Calu3 (cell line): ENCODE measurements at regions of chr3 and their contacts with region 1.

Region 1: GRCh38 chr3:184371570-184372018 is 6.4 kb downstream of the THPO start:
- DNase-seq: peak; percentile 91
- H3K4me3 Mint-ChIP-seq: no peak overlapping the region
- H3K27ac Mint-ChIP-seq: peak overlapping the region; percentile 58
- H3K4me1 Mint-ChIP-seq: peaks cover 7% of the 10 kb centered on the region
- H3K27me3 Mint-ChIP-seq: peaks cover 48% of the 10 kb centered on the region
- CTCF ChIP-seq: peak; percentile 99

Region 2: DNA sequence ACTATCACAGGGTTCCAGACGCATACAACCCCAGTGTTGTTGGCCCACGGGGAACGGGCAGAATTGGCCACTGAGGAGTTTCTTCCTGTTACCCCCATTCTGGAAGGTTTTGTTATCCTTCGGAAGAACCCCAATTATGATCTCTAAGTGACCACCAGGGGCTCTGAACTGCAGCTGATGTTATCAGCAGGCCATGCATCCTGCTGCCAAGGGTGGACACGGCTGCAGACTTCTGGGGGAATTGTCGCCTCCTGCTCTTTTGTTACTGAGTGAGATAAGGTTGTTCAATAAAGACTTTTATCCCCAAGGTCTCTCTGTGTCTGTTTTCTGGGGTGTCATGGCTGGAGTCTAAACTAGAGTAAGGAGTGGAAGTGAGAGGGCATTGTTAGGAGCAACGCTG is 62.9 kb before region 1 on chr3:
- CTCF ChIA-PET with region 1: no interaction called
- intact Hi-C with region 1: no loop called
- DNase-seq: no peak
- H3K4me3 Mint-ChIP-seq: no peak overlapping the region
- H3K27ac Mint-ChIP-seq: no peak overlapping the region
- H3K4me1 Mint-ChIP-seq: no peaks in the 10 kb centered on the region
- H3K27me3 Mint-ChIP-seq: no peaks in the 10 kb centered on the region
- CTCF ChIP-seq: no peak

Region 3: DNA sequence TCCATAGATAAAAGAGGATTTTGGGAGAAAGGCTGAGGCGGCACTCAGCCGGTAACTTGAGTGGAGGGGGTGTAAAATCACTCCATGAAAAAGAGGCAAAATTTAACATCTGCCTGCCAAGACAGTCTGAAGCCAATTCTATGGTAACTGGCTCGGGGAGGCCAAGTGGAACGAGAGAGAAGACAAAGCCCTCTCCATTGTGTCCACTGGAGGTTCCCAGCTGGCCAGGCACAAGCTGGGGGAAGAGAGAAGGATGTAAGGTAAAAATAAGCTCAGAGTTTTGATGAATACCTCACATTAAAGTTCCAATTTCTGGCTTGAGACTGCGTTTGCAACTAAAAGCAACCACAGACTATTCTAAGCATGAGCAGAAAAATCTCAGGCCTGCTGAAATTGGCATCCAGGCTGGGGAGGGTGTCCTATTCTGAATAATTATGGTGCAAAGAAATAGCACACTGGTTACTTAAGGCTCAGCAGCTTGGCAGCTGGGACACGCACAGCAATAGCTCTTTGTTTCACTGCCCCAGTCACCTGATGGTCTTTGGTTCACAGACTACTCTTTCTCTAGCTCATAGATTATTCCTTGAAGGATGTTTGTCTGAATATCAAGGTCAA is 57.1 kb after region 1 on chr3:
- CTCF ChIA-PET with region 1: no interaction called
- intact Hi-C with region 1: no loop called
- DNase-seq: no peak
- H3K4me3 Mint-ChIP-seq: no peak overlapping the region
- H3K27ac Mint-ChIP-seq: no peak overlapping the region
- H3K4me1 Mint-ChIP-seq: no peaks in the 10 kb centered on the region
- H3K27me3 Mint-ChIP-seq: peaks cover 53% of the 10 kb centered on the region
- CTCF ChIP-seq: no peak

Region 4: DNA sequence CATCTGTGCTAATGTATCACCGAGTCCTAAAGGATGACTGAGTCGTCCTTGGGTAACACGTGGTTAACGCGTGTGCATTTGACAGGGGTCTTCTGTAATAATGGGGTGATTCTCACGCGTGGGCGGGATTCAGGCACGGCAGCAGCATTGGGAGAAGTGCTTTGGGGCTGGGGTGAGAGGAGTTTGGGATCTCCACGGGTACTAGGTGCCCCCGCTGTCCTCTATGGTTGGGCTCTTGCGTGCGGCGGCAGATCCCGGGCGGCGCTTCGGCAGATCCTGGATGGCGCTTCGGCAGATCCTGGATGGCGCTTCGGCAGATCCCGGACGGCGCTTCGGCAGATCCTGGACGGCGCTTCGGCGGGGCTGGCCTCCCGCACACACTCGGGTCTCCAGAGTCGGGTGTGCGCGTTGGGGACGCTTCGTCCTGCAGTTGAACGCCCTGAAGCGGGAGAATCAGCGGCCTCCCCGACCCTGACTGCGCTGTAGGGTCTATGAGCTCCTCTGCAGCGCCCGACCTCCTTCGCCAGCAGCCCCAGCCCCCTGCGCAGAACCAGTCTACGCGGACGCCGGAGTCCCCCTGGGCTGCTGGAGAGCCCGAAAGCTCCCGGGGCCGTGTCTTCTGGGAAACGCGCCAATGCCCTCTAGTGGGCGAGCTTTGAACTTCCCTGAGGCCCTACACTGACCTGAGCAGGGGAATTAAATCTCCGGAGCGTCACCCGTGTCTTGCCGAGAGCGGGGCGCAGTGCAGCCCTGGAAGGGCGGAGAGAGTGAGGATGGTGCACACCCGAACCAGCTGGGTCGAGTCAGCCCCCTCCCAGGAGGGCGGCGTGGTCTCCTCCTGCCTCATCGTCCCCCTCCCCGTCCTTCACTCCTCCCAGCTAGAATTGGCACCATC is 141.9 kb after region 1 on chr3:
- CTCF ChIA-PET with region 1: interaction called, 85 read pairs
- intact Hi-C with region 1: loop called (anchors 10 kb)
- DNase-seq: peak; percentile 94
- H3K4me3 Mint-ChIP-seq: peak overlapping the region; percentile 58
- H3K27ac Mint-ChIP-seq: no peak overlapping the region
- H3K4me1 Mint-ChIP-seq: no peaks in the 10 kb centered on the region
- H3K27me3 Mint-ChIP-seq: peaks cover 100% of the 10 kb centered on the region
- CTCF ChIP-seq: peak; percentile 99

Region 5: DNA sequence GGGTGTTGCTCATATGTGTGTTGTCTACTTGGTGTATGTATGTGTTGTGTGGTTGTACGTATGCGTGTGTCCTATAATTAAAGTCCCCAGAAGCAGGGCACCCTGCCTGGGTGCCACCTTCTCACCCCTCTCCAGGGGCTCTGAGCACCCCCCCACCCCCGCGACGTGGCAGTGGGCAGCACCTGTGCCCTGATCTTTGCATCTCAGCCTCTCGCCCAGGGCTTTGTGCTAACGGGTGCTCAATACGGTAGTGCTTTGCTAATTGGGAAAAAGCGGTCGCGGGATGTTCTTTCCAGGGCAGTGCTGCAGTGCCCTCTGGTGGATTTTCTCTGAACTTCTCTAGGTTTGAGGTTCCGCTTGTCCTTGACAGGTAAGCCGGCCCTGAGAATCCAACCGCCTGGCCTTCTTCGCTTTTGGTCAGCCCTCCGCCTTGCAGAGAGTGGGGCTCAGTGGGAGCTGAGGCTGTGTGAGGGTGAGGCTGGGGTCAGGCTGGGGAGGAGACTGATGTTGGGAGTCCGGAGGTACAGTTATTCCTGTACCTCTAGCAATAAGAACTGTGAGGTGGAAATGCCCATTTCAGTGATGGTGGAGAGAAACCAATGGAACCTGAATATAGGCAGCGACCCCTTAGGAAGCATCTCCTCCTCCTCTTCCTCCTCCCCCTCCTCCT is 172.4 kb after region 1 on chr3:
- CTCF ChIA-PET with region 1: interaction called, 55 read pairs
- intact Hi-C with region 1: loop called (anchors 1 kb)
- DNase-seq: peak; percentile 92
- H3K4me3 Mint-ChIP-seq: no peak overlapping the region
- H3K27ac Mint-ChIP-seq: no peak overlapping the region
- H3K4me1 Mint-ChIP-seq: no peaks in the 10 kb centered on the region
- H3K27me3 Mint-ChIP-seq: peaks cover 92% of the 10 kb centered on the region
- CTCF ChIP-seq: peak; percentile 95

Region 6: DNA sequence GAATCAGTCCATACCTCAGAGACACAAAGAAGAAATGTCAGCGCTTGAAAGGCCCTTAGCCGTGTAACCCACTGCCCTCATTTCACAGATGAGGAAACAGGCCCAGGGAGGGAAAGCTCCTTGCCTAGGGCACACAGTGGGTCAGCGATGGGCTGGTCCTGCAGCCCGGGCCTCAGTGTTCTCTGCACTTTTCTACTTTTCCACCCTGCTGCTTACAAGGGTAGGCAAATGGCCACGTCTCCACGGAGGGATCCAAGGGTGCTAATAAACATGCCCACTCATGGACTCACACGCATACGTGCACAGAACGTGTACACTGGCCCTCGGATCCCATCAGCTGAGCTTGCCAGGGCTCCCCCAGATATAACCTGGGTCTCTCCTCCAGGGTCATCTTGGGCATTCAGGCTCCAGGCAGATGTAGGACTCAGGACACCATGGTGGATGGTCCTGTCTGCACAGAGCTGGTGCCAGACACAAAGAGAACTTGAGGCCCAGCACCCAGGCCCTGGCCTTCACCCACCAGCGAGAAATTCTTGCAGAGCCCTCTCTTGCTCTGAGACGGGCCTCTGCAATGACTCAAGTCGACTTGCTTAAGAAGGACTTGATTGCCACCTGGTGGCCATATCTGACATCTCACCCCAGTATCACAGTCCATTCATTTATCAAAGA is 405.9 kb after region 1 on chr3:
- CTCF ChIA-PET with region 1: no interaction called
- intact Hi-C with region 1: loop called (anchors 5 kb)
- DNase-seq: peak; percentile 94
- H3K4me3 Mint-ChIP-seq: no peak overlapping the region
- H3K27ac Mint-ChIP-seq: no peak overlapping the region
- H3K4me1 Mint-ChIP-seq: peaks cover 21% of the 10 kb centered on the region
- H3K27me3 Mint-ChIP-seq: peaks cover 82% of the 10 kb centered on the region
- CTCF ChIP-seq: peak; percentile 96